Adrenal gland (tissue), 19 donors: ENCODE measurements at regions of chr11 and their contacts with region 1.

Region 1: GRCh38 chr11:65180877-65181568 is 705 bp upstream of the CAPN1 start:
- DNase-seq: peak; percentile 56 to 72 (median 67)
- H3K4me3 ChIP-seq: peak overlapping the region; percentile 5 to 100 (median 57)
- H3K27ac ChIP-seq: peak overlapping the region in 4 of 5 donors; percentile 58 to 96 (median 81)
- H3K4me1 ChIP-seq: peaks cover 12 to 22% of the 10 kb centered on the region in 2 donors
- H3K27me3 ChIP-seq: no peaks in the 10 kb centered on the region
- CTCF ChIP-seq: peak in 5 of 6 experiments; percentile 30 to 58 (median 49)
- POLR2A ChIP-seq: peak; percentile 23 to 49

Region 2: DNA sequence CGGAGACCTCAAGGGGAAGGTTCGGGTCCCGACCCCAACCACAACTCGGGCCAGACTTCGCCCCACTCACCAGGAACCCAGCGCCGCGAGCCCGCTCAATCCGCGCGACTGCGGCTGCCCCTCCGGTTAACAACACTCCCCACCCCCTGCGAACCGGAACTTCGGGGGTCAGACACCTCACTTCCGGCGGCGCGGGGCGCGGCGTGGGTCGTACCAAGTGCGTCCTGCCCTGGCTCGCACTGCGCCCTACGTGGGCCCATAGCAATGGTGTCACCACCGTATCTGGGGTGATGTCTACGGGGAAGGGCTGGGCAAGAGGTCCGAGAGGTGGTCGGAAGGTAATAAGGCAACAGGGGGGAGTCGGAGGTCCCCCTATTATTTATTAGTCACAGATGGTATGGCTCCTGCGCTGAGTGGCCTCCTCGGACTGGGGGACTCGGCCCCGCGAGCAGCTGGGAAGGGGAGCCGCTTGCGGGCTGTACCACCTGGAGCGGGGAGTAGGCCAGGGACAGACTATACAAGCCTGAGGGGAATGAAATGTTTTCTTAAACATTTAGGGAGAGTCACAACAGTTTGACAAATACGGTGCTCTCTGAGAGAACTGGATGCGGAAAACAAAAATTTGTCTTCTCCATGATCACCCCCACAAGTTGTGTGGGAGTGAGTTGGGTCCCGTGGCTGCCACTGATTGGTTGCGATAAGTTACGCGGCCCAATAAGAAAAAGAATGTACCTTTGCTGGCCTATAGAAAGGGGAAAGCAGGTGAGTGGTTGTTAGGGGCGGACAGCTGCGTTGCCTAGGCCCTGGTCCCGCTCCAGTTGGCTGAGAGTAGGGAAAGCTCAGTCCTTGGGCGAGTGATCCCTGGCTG is 46.4 kb before region 1 on chr11 and contains the start of gene SYVN1:
- intact Hi-C with region 1: loop called in 1 of 2 experiments (anchors 5 kb)
- DNase-seq: peak; percentile 92 to 98 (median 97)
- H3K4me3 ChIP-seq: peak within 1 kb of the TSS; percentile 52 to 92 (median 84)
- H3K27ac ChIP-seq: peak within 1 kb of the TSS; percentile 80 to 98 (median 96)
- H3K4me1 ChIP-seq: peaks cover 18 to 29% of the 10 kb centered on the region in 2 donors
- H3K27me3 ChIP-seq: no peaks in the 10 kb centered on the region
- CTCF ChIP-seq: no peak
- POLR2A ChIP-seq: peak; percentile 88 to 92
- total RNA-seq, gene SYVN1: 9.7 to 119 (median 61.4) TPM